Activated T-helper 2 cell treated with anti-CD3 and anti-CD28 coated beads, Interferon-gamma antibody, Interleukin-2, Interleukin-4, amounts not matched to agents 10 μg/mL and 5 μg/mL and 100 μg/mL, durations not matched to agents 14 hours and 24 hours and 36 hours (primary cell): ENCODE measurements at regions of chr4 and their contacts with region 1.

Region 1: DNA sequence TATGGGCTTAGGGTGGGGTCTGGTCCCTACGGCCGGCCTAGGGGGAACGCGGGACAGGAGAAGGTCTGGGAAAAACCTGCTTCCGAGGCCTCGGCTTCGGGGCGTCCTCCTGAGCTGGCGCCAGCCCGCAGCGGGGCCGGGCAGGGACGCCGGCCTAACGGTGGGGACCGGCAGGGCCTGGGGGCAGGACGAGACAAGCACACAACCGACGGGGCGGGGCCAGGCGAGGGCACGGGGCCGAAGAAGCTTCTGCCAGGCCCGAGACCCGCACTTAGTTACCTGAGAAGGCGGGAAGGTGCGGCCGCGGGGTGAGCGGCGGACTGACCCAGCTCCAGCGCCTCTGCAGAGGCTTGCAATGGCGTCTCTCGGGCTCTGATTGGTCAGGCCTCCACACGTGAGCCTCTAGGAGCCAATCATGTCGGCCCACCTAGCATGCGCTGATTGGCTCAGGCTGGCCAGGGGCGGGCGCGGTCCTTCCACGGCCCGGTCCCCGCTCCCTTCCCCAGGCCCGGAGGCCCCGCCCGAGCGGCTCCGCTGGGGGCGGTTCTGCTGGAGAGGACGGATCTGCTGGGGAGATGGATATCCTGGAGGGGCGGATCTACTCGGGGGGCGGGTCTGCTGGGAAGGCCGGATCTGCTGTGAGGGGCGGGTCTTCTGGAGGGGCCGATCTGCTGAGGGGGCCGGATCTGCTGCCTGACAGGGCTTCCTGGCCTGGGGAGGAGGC is 44.3 kb downstream of the CPLX1 start:
- DNase-seq: peak; percentile 100
- H3K4me3 Mint-ChIP-seq: peak overlapping the region; percentile 85
- H3K27ac Mint-ChIP-seq: peak overlapping the region; percentile 85
- H3K4me1 Mint-ChIP-seq: peaks cover 40% of the 10 kb centered on the region
- H3K27me3 Mint-ChIP-seq: peaks cover 14% of the 10 kb centered on the region

Region 2: DNA sequence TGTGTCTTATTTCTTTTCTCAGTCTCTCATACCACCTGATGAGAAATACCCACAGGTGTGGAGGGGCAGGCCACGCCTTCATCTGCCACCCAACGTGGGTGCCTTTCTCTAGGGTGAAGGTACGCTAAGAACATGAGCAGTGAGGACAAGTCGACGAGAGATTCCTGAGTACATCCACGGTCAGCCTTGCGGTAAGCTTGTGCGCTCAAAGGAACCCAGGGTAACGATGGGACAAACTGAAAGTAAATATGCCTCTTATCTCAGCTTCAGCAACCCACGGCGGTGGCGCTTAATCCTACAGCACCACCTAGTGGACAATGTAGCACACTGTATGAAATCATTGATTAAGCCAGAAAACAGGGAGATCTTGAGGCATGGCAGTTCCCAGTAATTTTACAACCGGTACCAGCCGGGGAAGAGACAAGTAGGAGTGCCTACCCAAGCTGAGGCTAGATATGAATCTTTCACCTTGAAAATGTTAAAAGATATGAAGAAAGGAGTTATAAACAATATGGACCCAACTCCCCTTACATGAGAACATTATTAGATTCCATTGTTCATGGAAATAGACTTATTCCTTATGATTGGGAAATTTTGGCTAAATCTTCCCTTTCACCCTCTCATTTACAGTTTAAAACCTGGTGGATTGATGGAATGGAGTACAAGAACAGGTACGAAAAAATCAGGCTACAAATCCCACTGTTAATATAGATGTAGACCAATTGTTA is 539.4 kb before region 1 on chr4:
- intact Hi-C with region 1: loop called (anchors 10 kb)
- DNase-seq: peak; percentile 61
- H3K4me3 Mint-ChIP-seq: peak overlapping the region; percentile 75
- H3K27ac Mint-ChIP-seq: peak overlapping the region; percentile 56
- H3K4me1 Mint-ChIP-seq: peaks cover 10% of the 10 kb centered on the region
- H3K27me3 Mint-ChIP-seq: no peaks in the 10 kb centered on the region

Region 3: DNA sequence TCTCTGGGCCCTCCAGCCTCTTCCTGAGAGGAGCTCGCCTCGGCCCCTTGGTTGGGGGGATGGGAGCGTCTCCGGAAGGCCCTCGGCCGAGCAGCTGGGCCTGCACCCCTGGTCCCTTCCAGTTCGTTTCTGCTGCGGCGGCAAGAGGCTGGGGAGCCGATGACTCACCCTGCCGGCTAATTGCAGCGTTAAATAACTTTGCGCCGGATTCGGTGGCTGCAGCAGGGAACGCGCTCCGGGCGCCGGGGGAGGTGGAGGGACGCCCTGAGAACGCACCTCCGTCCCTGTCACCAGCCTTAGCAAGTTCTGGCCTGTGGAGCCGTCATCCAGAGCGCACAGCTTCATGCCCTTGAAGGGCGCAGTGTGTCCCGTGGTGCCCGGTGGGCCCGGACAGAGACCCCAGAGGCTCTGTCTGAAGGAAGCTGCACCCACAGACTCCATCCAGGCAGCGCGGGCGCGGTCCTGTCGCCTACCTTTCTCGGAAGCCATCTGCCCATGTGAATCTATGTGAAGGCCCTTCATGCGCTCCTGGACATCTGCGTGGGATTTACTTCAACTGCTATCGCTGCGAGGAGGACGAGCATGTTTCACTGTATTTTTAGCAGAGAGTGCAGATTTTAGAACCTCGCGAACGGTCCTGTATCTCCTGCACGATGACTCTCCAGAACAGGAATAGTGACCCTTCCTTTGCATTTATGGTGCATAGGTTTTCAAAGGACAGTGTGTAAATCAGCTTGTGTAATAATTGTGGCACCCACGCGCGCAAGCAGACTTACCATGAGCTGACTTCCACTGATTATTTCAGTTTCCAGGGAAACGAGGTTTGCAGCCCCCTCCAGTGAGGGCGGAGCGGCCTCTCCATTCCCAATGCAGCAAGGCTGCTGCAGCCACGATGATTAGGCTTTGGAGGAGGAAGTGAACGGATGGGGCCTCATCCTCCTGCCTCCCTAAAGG is 203.9 kb before region 1 on chr4:
- intact Hi-C with region 1: no loop called
- DNase-seq: no peak
- H3K4me3 Mint-ChIP-seq: no peak overlapping the region
- H3K27ac Mint-ChIP-seq: no peak overlapping the region
- H3K4me1 Mint-ChIP-seq: peaks cover 4% of the 10 kb centered on the region
- H3K27me3 Mint-ChIP-seq: peaks cover 50% of the 10 kb centered on the region

Region 4: DNA sequence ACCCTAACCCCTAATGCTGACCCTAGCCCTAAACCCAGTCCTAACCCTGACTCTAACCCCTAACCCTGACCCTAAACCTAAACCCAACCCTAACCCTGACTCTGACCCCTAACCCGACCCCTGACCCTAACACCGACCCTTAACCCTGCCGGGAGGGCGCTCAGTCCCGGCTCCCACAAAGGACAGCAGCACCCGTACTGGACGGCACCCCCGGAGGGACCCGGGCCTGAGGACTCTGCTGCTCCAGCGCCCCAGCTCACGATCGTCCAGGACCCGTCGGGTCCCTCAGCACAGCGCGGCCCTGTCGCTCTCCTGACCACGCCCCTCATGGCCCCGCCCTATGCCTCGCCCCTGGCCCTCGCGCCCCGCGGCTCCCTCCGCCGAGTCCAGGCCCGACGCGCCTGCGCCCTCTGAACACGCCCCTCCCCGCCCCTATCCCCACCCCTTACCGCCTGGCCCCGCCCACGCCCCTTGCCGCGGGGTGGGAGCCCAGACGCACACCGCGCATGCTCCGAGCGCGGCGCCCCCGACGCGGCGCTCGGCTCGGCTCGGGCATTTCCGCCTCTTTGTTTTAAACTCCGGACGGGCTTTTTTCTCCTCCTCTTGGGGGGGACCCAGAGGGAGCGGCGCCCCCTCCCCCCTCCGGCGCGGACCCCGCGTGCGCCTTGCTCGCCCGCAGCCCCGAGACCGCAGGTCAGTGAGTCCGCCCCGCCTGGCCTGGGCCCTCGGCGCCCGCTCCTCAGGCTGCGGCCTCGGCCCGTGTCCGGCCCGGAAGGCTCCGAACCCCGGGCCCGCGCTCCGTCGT is 76.2 kb before region 1 on chr4 and contains the start of gene PCGF3:
- intact Hi-C with region 1: loop called (anchors 5 kb)
- DNase-seq: peak; percentile 94
- H3K4me3 Mint-ChIP-seq: peak within 1 kb of the TSS; percentile 74
- H3K27ac Mint-ChIP-seq: peak within 1 kb of the TSS; percentile 52
- H3K4me1 Mint-ChIP-seq: peaks cover 16% of the 10 kb centered on the region
- H3K27me3 Mint-ChIP-seq: no peaks in the 10 kb centered on the region
- total RNA-seq, gene PCGF3: 35.0 and 39.2 TPM in 2 replicates

Region 5: DNA sequence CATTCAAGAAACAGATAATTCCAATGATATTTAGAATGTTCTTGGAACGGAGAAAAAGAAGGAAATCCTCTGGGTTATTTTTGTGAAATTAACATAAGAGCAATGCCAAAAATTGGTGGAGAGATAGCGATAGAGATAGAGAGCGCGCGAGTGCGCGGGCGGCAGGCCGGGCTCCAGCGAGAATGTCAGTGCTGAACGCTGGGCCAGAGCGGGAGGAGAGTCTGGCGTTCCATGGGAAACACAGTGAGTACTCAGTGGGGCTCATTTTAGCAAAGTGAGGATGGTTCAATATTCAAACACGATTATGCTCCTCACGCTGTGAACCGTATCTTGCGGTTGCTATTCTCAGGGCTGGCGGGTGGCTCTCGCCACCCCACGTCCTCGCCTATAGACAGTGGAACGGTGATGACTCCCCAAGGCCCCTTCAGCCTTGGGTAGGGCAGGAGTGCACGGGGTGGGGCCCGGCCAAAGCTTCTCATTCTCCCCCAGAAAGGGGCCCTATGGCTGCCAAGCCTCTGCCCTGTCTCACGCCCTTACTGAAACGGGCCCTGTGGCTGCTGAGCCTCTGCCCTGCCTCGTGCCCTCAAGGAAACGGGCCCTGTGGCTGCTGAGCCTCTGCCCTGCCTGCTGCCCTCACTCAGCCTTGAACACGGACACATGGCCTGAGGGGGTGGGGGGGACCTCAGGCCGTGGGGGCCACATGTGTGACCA is 27.4 kb after region 1 on chr4:
- intact Hi-C with region 1: no loop called
- DNase-seq: no peak
- H3K4me3 Mint-ChIP-seq: no peak overlapping the region
- H3K27ac Mint-ChIP-seq: no peak overlapping the region
- H3K4me1 Mint-ChIP-seq: no peaks in the 10 kb centered on the region
- H3K27me3 Mint-ChIP-seq: peaks cover 19% of the 10 kb centered on the region

Region 6: GRCh38 chr4:879729-880077 is 98.0 kb after region 1 on chr4:
- intact Hi-C with region 1: loop called (anchors 1 kb)
- DNase-seq: peak; percentile 50
- H3K4me3 Mint-ChIP-seq: peak overlapping the region; percentile 81
- H3K27ac Mint-ChIP-seq: peak overlapping the region; percentile 98
- H3K4me1 Mint-ChIP-seq: peaks cover 29% of the 10 kb centered on the region
- H3K27me3 Mint-ChIP-seq: no peaks in the 10 kb centered on the region

Region 7: DNA sequence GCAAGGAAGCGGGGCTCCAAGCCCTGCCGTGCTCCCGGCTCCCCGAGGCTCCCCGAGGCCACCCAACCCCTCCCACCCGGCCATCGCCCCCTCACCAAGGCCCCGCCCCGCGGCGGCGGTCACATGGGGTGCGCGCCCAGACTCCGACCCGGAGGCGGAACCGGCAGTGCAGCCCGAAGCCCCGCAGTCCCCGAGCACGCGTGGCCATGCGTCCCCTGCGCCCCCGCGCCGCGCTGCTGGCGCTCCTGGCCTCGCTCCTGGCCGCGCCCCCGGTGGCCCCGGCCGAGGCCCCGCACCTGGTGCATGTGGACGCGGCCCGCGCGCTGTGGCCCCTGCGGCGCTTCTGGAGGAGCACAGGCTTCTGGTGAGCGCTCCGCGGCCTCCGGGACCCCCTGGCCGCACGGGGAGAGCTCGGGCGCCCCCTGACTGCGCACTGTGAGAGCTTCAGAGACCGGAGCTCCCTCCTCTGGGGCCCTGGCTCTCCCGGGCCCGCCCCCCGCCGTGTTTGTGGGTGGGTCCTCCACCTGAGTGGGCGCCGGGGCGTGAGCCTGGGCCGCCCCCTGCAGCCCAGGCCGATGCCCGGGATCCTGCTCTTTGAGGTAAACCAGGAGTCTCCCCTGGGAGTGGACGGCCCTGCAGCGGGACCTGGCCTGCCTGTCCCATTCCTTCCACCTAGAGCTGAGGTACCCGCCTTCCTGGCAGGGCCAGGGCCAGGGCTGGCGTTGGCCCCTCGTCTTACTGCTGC is 205.4 kb after region 1 on chr4 and contains the start of gene IDUA:
- intact Hi-C with region 1: loop called (anchors 5 kb)
- DNase-seq: peak; percentile 80
- H3K4me3 Mint-ChIP-seq: peak within 1 kb of the TSS; percentile 87
- H3K27ac Mint-ChIP-seq: peak within 1 kb of the TSS; percentile 83
- H3K4me1 Mint-ChIP-seq: peaks cover 17% of the 10 kb centered on the region
- H3K27me3 Mint-ChIP-seq: no peaks in the 10 kb centered on the region
- total RNA-seq, gene IDUA: 23.6 and 25.5 TPM in 2 replicates

Region 8: DNA sequence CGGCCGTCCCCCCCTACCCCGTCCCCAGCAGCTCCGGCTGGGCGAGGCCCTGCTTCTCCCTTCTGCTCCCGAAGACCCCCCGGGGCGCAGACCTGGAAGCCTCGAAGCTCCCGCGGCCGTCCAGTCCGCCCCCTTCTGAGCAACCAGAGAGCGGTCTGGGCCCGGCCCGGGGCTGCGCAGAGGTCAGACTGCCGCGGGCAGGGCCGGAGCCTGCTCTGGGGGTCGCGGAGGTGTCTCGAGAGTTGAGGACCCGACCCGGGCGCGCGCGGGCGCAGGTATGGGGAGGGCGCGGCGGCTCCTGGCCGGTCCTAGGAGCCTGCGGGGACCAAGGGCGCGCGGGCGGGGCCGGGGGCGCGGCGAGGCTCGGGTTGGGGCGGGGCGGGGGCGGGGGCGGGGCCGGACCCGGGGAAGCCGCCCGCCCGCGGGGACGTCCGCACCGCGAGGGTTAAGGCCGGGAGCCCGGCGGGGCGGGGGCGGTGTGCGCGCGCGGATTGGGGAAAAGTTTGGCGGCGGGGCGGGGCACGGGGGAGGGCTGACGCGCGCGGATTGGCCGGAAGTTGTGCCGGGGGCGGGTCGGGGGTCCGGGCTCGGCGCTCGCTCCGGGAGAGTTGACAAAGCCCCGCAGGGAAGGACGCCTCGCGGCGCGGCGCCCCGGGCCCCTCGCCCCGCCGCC is 229.5 kb after region 1 on chr4 and contains the start of gene FGFRL1:
- intact Hi-C with region 1: loop called (anchors 1 kb)
- DNase-seq: peak; percentile 89
- H3K4me3 Mint-ChIP-seq: peak within 1 kb of the TSS; percentile 82
- H3K27ac Mint-ChIP-seq: peak within 1 kb of the TSS; percentile 89
- H3K4me1 Mint-ChIP-seq: peaks cover 9% of the 10 kb centered on the region
- H3K27me3 Mint-ChIP-seq: peaks cover 25% of the 10 kb centered on the region
- total RNA-seq, gene FGFRL1: 17.5 TPM in 2 replicates